ENCODE measurements at regions of chr12 and their contacts with region 1.

Region 1: GRCh38 chr12:94941440-94941862 is 62.0 kb downstream of the NDUFA12 start:
- DNase-seq: no peak
- H3K4me3 ChIP-seq: no peak overlapping the region
- H3K27ac ChIP-seq: no peak overlapping the region
- H3K4me1 ChIP-seq: no peaks in the 10 kb centered on the region
- H3K27me3 ChIP-seq: no peaks in the 10 kb centered on the region
- CTCF ChIP-seq: no peak
- POLR2A ChIP-seq: no peak

Region 2: DNA sequence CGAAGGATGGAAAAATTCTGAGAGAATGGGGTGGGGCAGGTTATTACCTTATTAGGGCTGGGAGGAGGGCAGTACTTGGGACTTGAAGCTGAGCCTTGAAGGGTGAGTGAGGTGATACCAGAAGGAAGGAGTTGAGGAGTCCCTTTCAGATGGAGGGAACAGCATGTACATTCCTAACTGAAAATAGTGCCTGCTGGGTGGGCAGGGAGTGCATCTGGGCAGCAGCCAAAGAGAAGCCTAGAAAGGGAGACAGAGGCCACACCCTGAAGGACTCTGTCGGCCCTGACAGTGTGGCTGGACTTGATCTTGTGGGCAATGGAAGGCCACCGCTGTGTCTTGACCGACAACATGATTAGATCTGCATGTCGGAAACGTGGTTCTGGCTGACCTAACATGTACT is 85.6 kb before region 1 on chr12:
- intact Hi-C with region 1: loop called (anchors 2 kb)
- DNase-seq: no peak
- H3K4me3 ChIP-seq: no peak overlapping the region
- H3K27ac ChIP-seq: no peak overlapping the region
- H3K4me1 ChIP-seq: no peaks in the 10 kb centered on the region
- H3K27me3 ChIP-seq: no peaks in the 10 kb centered on the region
- CTCF ChIP-seq: no peak
- POLR2A ChIP-seq: no peak

Region 3: GRCh38 chr12:95022477-95022876 is 81.0 kb after region 1 on chr12:
- intact Hi-C with region 1: no loop called
- DNase-seq: no peak
- H3K4me3 ChIP-seq: no peak overlapping the region
- H3K27ac ChIP-seq: no peak overlapping the region
- H3K4me1 ChIP-seq: no peaks in the 10 kb centered on the region
- H3K27me3 ChIP-seq: no peaks in the 10 kb centered on the region
- CTCF ChIP-seq: no peak
- POLR2A ChIP-seq: no peak